Activated CD4-positive, alpha-beta T cell treated with anti-CD3 and anti-CD28 coated beads, Interleukin-2, amount 10 ng/mL, durations not matched to agents 24 days and 14 days (primary cell): ENCODE measurements at regions of chr19 and their contacts with region 1.

Region 1: GRCh38 chr19:19404879-19405860 is at the start of gene GATAD2A:
- DNase-seq: peak; percentile 97
- H3K4me3 Mint-ChIP-seq: peak within 1 kb of the TSS; percentile 90
- H3K27ac Mint-ChIP-seq: peak within 1 kb of the TSS; percentile 93
- H3K4me1 Mint-ChIP-seq: peaks cover 55% of the 10 kb centered on the region
- H3K27me3 Mint-ChIP-seq: no peaks in the 10 kb centered on the region
- total RNA-seq, gene GATAD2A: 134 and 135 TPM in 2 replicates

Region 2: DNA sequence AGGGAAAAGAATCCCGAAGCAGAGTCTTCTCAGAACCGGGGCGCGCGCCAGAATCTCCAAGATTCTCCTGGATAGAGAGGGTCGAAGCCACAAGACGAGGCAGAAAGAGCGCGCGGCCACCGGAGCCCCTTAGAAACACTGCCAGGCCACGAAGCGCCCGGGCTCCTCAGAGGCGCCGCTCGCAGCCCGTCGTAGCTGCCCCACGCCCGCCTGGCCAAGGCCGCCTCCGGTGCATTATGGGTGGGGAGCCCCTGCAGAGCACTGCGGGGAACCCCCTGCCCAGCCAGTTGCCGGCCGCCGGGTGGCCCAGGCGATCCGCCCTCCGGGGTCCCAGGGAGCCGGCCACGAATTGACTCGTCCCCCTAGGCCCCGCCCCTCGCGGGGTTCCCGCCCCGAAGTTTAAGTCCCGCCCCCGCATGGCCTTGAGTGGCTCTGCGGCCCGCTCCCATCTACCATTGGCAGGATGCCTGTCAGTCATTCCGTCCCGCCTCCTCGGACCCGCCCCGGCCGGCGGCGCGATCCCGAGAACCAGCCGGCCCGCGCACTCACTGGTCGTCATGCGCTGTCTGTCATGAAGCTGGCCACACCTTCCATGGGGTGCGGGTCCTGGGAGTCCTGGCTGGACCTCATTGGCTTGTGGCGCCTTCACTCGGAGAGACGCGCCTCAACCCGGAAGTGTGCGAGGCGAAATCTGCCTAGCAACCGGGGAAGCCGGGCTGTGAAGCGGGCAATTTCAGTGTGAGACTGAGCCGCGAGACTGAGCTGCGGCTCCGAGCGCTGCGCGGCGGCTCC is 19.9 kb before region 1 on chr19:
- intact Hi-C with region 1: loop called (anchors 1 kb)
- DNase-seq: peak; percentile 100
- H3K4me3 Mint-ChIP-seq: peak overlapping the region; percentile 85
- H3K27ac Mint-ChIP-seq: peak overlapping the region; percentile 89
- H3K4me1 Mint-ChIP-seq: peaks cover 36% of the 10 kb centered on the region
- H3K27me3 Mint-ChIP-seq: no peaks in the 10 kb centered on the region